AG04449 (cell line): ENCODE measurements at regions of chr1 and their contacts with region 1.

Region 1: DNA sequence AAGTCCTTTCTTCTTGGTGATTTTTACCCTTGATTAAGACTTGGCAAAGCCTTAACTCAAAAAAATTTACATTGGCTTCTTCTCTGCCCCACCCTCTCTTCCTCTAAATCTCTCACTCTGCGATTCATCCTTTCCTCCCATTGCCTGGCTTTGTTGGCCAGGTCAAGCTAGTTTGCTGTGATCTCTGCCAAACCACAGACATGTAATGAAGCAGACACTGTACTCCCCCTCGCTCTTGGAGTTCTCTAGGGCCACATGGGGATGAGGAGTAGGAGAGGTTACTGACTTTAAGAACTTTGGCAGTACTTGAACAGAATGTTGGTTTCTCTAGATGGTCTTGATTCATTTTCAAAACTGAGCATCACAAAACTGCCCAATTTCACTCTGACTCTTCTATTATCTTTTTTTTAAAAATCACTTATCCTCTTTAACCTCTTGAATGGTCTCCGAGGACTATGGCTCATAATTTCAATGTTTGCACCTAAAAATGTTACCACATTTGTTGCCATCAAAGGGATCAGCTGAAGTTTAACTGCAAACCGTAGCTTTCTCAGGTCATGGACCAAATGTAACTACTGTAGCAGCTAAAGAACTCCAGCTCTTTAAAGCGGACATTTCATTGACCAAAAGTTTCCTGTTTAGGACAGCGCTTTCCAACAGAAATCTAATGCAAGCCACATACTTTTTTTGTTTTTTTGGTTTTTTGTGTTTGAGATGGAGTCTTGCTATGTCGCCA is 62.7 kb upstream of the IPO9 start:
- DNase-seq: peak; percentile 91
- H3K4me3 ChIP-seq: no peak overlapping the region
- CTCF ChIP-seq: no peak

Region 2: GRCh38 chr1:201778279-201779065 is 12.2 kb after region 1 on chr1:
- CTCF ChIA-PET with region 1: interaction called, 11 read pairs
- POLR2A ChIA-PET with region 1: interaction called, 4 read pairs
- DNase-seq: no peak
- H3K4me3 ChIP-seq: no peak overlapping the region
- CTCF ChIP-seq: no peak

Region 3: DNA sequence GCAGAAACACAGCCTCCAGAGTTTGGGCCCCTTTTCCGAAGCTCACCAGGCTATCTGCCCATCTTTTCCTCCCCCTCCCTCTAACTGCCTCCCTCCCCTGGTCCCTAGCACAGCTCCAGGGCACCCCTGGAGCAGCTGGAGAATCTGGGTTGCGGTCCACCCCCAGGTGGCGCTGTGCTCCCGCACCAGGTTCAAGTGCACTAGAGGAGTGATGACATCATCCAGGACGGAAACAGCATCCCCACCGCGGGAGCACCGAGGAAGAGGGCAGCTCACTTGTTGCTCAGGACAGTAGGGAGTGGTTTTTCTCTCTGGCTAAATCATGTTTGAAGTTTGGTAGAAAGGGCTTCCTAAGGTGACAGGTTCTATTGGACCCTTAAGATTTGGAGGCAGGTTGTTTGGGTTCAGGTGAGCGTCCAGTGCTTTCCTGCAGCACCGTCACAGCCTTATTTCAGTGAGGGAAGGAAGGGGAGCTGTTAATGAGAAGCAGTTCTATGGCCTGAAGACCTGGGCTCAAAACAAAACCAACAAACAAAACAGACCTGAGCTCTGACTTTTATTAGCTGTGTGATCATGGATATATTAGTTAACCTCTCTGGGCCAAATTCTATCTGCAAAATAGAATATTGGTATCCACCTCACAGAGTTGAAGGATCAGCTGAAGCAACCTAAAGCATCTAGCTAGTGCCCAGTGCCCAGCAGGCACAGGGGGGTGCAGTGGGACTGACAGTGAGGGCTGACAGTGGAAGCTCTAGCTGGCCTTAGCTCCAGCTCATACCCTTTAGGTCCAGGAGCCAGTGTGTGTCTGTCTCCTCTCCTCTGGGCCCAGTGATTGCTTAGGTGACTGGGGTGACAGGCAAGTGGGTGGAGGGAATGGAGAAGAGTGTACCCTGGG is 129.9 kb after region 1 on chr1:
- CTCF ChIA-PET with region 1: no interaction called
- POLR2A ChIA-PET with region 1: no interaction called
- DNase-seq: no peak
- H3K4me3 ChIP-seq: no peak overlapping the region
- CTCF ChIP-seq: peak; percentile 99